ENCODE measurements at regions of chr19 and their contacts with region 1.

Region 1: GRCh38 chr19:15555759-15556633 is 47.7 kb downstream of the CYP4F22 start:
- DNase-seq: peak; percentile 96
- H3K4me3 ChIP-seq: peak overlapping the region in 1 of 3 experiments; percentile 6
- H3K27ac ChIP-seq: no peak overlapping the region
- H3K4me1 ChIP-seq: peaks cover 9% of the 10 kb centered on the region
- H3K27me3 ChIP-seq: peaks cover 0 to 1% of the 10 kb centered on the region in 2 experiments
- CTCF ChIP-seq: peak; percentile 92 to 96
- POLR2A ChIP-seq: no peak

Region 2: GRCh38 chr19:15091901-15092753 is 463.9 kb before region 1 on chr19:
- CTCF ChIA-PET with region 1: interaction called, 26 read pairs
- POLR2A ChIA-PET with region 1: interaction called, 10 read pairs
- dilution Hi-C with region 1: no loop called
- intact Hi-C with region 1: loop called (anchors 2 kb)
- DNase-seq: peak; percentile 58
- H3K4me3 ChIP-seq: no peak overlapping the region
- H3K27ac ChIP-seq: no peak overlapping the region
- H3K4me1 ChIP-seq: no peaks in the 10 kb centered on the region
- H3K27me3 ChIP-seq: no peaks in the 10 kb centered on the region
- CTCF ChIP-seq: peak; percentile 55 to 60
- POLR2A ChIP-seq: no peak

Region 3: DNA sequence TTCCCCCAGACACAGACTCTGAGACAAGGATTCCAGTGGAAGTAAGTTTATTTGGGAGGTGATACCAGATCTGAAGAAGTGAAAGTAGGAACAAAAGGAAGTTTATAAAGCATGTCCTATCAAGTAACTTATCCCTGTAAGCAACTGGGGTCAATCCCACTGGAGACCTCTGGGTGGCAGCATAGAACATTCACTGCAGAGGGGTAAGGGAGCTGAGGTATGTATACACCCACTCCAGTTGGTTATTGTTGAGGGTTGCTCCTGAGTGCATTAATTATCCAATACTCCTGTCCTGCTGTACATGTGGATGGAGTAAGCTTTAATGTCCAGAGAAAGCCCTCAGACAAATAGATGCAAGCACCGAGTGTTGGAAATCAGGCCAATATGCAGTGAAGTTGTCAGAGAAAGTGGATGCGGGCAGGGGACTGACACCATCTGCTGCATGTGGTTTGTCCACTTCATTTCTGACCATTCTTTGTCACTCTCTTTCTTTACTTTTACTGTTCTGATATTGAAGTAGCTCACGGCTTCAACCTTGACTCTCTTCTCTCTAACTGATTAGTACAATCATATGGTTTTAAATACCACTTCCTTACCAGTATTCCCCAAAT is 401.9 kb before region 1 on chr19:
- CTCF ChIA-PET with region 1: interaction called, 6 read pairs
- POLR2A ChIA-PET with region 1: no interaction called
- dilution Hi-C with region 1: no loop called
- intact Hi-C with region 1: loop called (anchors 5 kb)
- DNase-seq: peak; percentile 52
- H3K4me3 ChIP-seq: no peak overlapping the region
- H3K27ac ChIP-seq: no peak overlapping the region
- H3K4me1 ChIP-seq: no peaks in the 10 kb centered on the region
- H3K27me3 ChIP-seq: peaks cover 0 to 7% of the 10 kb centered on the region in 2 experiments
- CTCF ChIP-seq: peak; percentile 51 to 56
- POLR2A ChIP-seq: no peak

Region 4: GRCh38 chr19:15177269-15178116 is 378.5 kb before region 1 on chr19:
- CTCF ChIA-PET with region 1: interaction called, 24 read pairs
- POLR2A ChIA-PET with region 1: no interaction called
- dilution Hi-C with region 1: no loop called
- intact Hi-C with region 1: loop called (anchors 1 kb)
- DNase-seq: peak; percentile 78
- H3K4me3 ChIP-seq: peak overlapping the region in 1 of 3 experiments; percentile 13
- H3K27ac ChIP-seq: no peak overlapping the region
- H3K4me1 ChIP-seq: no peaks in the 10 kb centered on the region
- H3K27me3 ChIP-seq: no peaks in the 10 kb centered on the region
- CTCF ChIP-seq: peak; percentile 93 to 97
- POLR2A ChIP-seq: no peak

Region 5: GRCh38 chr19:15331419-15332310 is 224.3 kb before region 1 on chr19:
- CTCF ChIA-PET with region 1: interaction called, 3 read pairs
- POLR2A ChIA-PET with region 1: no interaction called
- dilution Hi-C with region 1: no loop called
- intact Hi-C with region 1: loop called (anchors 2 kb)
- DNase-seq: no peak
- H3K4me3 ChIP-seq: peak overlapping the region; percentile 74 to 92 (median 82)
- H3K27ac ChIP-seq: peak overlapping the region; percentile 86
- H3K4me1 ChIP-seq: peaks cover 24% of the 10 kb centered on the region
- H3K27me3 ChIP-seq: no peaks in the 10 kb centered on the region
- CTCF ChIP-seq: no peak
- POLR2A ChIP-seq: no peak

Region 6: GRCh38 chr19:15418588-15419412 is 137.2 kb before region 1 on chr19 and contains the start of gene AKAP8L:
- CTCF ChIA-PET with region 1: interaction called, 124 read pairs
- POLR2A ChIA-PET with region 1: interaction called, 13 read pairs
- dilution Hi-C with region 1: no loop called
- intact Hi-C with region 1: loop called (anchors 1 kb)
- DNase-seq: peak; percentile 100
- H3K4me3 ChIP-seq: peak within 1 kb of the TSS; percentile 72 to 85 (median 85)
- H3K27ac ChIP-seq: peak within 1 kb of the TSS; percentile 62
- H3K4me1 ChIP-seq: peaks cover 14% of the 10 kb centered on the region
- H3K27me3 ChIP-seq: no peaks in the 10 kb centered on the region
- CTCF ChIP-seq: peak; percentile 76 to 90
- POLR2A ChIP-seq: peak; percentile 93
- total RNA-seq, gene AKAP8L: 95.4 and 99.6 TPM in 2 replicates

Region 7: DNA sequence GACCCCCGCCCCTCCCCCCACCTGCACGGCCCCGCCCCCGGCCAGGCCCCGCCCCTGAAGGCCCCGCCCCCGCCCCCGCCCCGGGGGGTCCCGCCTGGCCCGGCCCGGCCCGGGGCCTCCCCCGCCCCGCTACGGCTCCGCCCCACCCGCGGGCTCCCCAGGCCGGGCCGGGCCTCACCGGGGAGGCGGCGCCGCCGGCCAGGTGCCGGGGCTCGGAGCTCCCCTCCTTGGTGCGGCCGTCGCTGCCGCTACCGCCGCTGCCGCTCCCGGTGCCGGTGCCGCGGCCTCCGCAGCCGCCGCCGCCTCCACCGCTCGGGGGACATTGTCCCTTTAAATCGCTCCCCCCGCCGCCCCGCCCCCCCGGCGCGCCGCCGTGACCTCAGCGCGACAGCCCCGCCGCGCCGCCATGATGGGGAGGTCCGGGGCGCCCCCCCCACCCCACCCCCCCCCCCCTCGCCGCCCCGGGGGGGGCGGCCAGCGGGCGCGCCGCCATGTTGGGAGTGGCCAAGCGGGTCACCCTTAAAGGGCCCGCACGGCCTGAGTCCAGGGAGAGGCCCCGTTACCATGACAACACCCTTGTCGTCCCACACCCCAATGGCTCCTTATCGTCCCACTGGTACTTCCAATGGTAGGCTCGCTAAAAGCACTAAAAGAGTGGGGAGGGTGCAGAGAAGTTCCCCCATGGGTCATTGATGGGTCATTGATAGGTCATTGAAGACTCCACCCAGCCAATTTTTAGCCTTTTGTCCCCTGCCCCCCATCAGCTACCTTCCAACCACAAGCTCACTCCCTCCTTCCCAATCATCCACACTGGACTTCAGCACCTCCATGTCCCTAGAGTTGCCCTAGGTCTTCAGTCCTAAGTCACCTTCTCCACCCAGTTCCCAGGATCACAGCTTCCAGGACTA is 106.1 kb before region 1 on chr19 and contains the start of gene WIZ:
- CTCF ChIA-PET with region 1: interaction called, 60 read pairs
- POLR2A ChIA-PET with region 1: interaction called, 6 read pairs
- dilution Hi-C with region 1: no loop called
- intact Hi-C with region 1: loop called (anchors 1 kb)
- DNase-seq: peak; percentile 56
- H3K4me3 ChIP-seq: peak within 1 kb of the TSS in 2 of 3 experiments; percentile 9 to 64
- H3K27ac ChIP-seq: no peak within 1 kb of the TSS
- H3K4me1 ChIP-seq: peaks cover 17% of the 10 kb centered on the region
- H3K27me3 ChIP-seq: no peaks in the 10 kb centered on the region
- CTCF ChIP-seq: no peak
- POLR2A ChIP-seq: no peak
- total RNA-seq, gene WIZ: 47.2 and 50.8 TPM in 2 replicates

Measured in endothelial cell of umbilical vein (primary cell).